ENCODE measurements at regions of chr18 and their contacts with region 1.

Region 1: GRCh38 chr18:23106580-23106979 is 28.7 kb upstream of the CABLES1 start:
- DNase-seq: peak; percentile 90
- H3K4me3 ChIP-seq: no peak overlapping the region
- H3K27me3 ChIP-seq: no peaks in the 10 kb centered on the region
- CTCF ChIP-seq: peak; percentile 13; the same call in 1 of the 2 replicates

Region 2: GRCh38 chr18:23095463-23095862 is 11.1 kb before region 1 on chr18:
- CTCF ChIA-PET with region 1: interaction called, 13 read pairs
- POLR2A ChIA-PET with region 1: no interaction called
- DNase-seq: no peak
- H3K4me3 ChIP-seq: no peak overlapping the region
- H3K27me3 ChIP-seq: no peaks in the 10 kb centered on the region
- CTCF ChIP-seq: no peak

Region 3: GRCh38 chr18:23529597-23529996 is 423.0 kb after region 1 on chr18:
- CTCF ChIA-PET with region 1: no interaction called
- POLR2A ChIA-PET with region 1: no interaction called
- DNase-seq: no peak
- H3K4me3 ChIP-seq: no peak overlapping the region
- H3K27me3 ChIP-seq: no peaks in the 10 kb centered on the region
- CTCF ChIP-seq: no peak